ENCODE measurements at regions of chr17 and their contacts with region 1.

Region 1: DNA sequence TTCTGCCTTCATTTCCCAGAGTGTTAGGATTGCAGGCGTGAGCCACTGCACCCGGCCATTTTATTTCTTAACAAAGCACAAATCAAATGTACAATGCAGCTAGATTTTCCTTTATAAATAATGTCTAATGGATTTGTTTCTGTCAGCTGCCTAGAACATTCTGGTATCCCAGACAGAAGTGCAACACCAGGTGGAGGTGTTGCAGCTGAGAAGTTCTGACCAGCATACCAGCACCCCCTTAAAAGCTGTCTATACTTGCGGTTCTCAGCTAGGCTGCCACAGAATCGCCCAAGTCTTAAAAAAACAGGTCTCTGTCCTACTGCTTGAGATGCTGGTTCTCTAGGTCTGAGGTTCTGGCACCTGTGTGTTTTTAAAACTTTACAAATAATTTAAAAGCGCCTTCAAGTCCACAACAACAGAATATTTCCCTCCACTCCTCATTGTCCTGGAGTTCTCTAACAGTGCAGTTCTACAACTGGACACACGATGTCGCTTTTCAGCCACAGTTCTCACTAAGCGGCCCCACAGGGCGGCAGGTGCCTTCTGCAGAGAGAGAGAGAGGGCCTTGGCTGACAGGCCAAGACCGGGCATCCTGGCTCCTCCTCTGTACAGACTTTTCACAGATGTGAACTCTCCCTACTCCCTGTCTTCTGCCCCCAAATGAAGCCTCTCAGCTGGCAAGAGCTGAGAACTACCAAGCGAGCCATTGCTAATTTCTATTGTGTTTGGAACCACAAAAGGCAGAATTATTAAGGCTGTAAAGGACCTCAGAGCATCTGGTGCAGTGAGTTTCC is 32.6 kb upstream of the MEOX1 start:
- DNase-seq: peak; percentile 87
- ATAC-seq: peak; percentile 100
- H3K4me3 Mint-ChIP-seq: no peak overlapping the region
- H3K27ac Mint-ChIP-seq: no peak overlapping the region
- H3K4me1 Mint-ChIP-seq: no peaks in the 10 kb centered on the region
- H3K27me3 Mint-ChIP-seq: peaks cover 7% of the 10 kb centered on the region
- CTCF ChIP-seq: peak; percentile 90

Region 2: GRCh38 chr17:43530278-43531081 is 163.8 kb before region 1 on chr17:
- CTCF ChIA-PET with region 1: no interaction called
- POLR2A ChIA-PET with region 1: no interaction called
- intact Hi-C with region 1: no loop called
- DNase-seq: no peak
- ATAC-seq: no peak
- H3K4me3 Mint-ChIP-seq: no peak overlapping the region
- H3K27ac Mint-ChIP-seq: no peak overlapping the region
- H3K4me1 Mint-ChIP-seq: no peaks in the 10 kb centered on the region
- H3K27me3 Mint-ChIP-seq: no peaks in the 10 kb centered on the region
- CTCF ChIP-seq: no peak

Region 3: DNA sequence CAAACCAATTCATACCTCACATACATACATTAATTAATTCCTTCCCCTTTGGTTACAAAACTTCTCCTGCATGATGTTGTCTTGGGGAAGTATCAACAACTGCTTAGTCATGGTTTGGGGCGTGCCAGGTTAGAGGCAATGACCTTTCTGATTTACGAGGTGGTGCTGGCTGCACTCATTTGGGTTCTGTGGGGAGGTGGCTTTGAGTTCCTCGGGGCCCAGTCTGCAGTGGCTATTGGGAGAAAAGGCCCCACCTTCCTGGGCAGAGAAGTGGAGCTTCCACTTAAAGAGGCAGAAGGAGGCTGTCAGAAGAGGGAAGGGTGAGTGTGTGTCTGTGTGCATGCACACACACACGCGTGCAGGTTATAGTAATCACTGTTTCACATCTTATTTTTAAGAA is 138.0 kb before region 1 on chr17:
- CTCF ChIA-PET with region 1: no interaction called
- POLR2A ChIA-PET with region 1: no interaction called
- intact Hi-C with region 1: no loop called
- DNase-seq: peak; percentile 49
- ATAC-seq: peak; percentile 68
- H3K4me3 Mint-ChIP-seq: no peak overlapping the region
- H3K27ac Mint-ChIP-seq: peak overlapping the region; percentile 18
- H3K4me1 Mint-ChIP-seq: peaks cover 10% of the 10 kb centered on the region
- H3K27me3 Mint-ChIP-seq: peaks cover 26% of the 10 kb centered on the region
- CTCF ChIP-seq: no peak

Region 4: GRCh38 chr17:43683928-43684653 is 10.2 kb before region 1 on chr17:
- CTCF ChIA-PET with region 1: interaction called, 16 read pairs
- POLR2A ChIA-PET with region 1: no interaction called
- intact Hi-C with region 1: no loop called
- DNase-seq: no peak
- ATAC-seq: no peak
- H3K4me3 Mint-ChIP-seq: no peak overlapping the region
- H3K27ac Mint-ChIP-seq: no peak overlapping the region
- H3K4me1 Mint-ChIP-seq: no peaks in the 10 kb centered on the region
- H3K27me3 Mint-ChIP-seq: no peaks in the 10 kb centered on the region
- CTCF ChIP-seq: no peak

Region 5: GRCh38 chr17:43740541-43740940 is 46.3 kb after region 1 on chr17:
- CTCF ChIA-PET with region 1: interaction called, 39 read pairs
- POLR2A ChIA-PET with region 1: no interaction called
- intact Hi-C with region 1: no loop called
- DNase-seq: no peak
- ATAC-seq: no peak
- H3K4me3 Mint-ChIP-seq: no peak overlapping the region
- H3K27ac Mint-ChIP-seq: no peak overlapping the region
- H3K4me1 Mint-ChIP-seq: no peaks in the 10 kb centered on the region
- H3K27me3 Mint-ChIP-seq: peaks cover 17% of the 10 kb centered on the region
- CTCF ChIP-seq: no peak

Region 6: GRCh38 chr17:43745541-43745940 is 51.3 kb after region 1 on chr17:
- CTCF ChIA-PET with region 1: interaction called, 39 read pairs
- POLR2A ChIA-PET with region 1: no interaction called
- intact Hi-C with region 1: no loop called
- DNase-seq: no peak
- ATAC-seq: no peak
- H3K4me3 Mint-ChIP-seq: no peak overlapping the region
- H3K27ac Mint-ChIP-seq: no peak overlapping the region
- H3K4me1 Mint-ChIP-seq: no peaks in the 10 kb centered on the region
- H3K27me3 Mint-ChIP-seq: peaks cover 25% of the 10 kb centered on the region
- CTCF ChIP-seq: no peak

Region 7: GRCh38 chr17:43927060-43927864 is 233.0 kb after region 1 on chr17:
- CTCF ChIA-PET with region 1: no interaction called
- POLR2A ChIA-PET with region 1: no interaction called
- intact Hi-C with region 1: no loop called
- DNase-seq: peak; percentile 63
- ATAC-seq: peak; percentile 60
- H3K4me3 Mint-ChIP-seq: peak overlapping the region; percentile 70
- H3K27ac Mint-ChIP-seq: peak overlapping the region; percentile 69
- H3K4me1 Mint-ChIP-seq: peaks cover 26% of the 10 kb centered on the region
- H3K27me3 Mint-ChIP-seq: no peaks in the 10 kb centered on the region
- CTCF ChIP-seq: no peak

Measured in activated CD8-positive, alpha-beta T cell treated with anti-CD3 and anti-CD28 coated beads for 36 hours (primary cell).